Right lobe of liver (tissue), 6 donors: ENCODE measurements at regions of chr11 and their contacts with region 1.

Region 1: DNA sequence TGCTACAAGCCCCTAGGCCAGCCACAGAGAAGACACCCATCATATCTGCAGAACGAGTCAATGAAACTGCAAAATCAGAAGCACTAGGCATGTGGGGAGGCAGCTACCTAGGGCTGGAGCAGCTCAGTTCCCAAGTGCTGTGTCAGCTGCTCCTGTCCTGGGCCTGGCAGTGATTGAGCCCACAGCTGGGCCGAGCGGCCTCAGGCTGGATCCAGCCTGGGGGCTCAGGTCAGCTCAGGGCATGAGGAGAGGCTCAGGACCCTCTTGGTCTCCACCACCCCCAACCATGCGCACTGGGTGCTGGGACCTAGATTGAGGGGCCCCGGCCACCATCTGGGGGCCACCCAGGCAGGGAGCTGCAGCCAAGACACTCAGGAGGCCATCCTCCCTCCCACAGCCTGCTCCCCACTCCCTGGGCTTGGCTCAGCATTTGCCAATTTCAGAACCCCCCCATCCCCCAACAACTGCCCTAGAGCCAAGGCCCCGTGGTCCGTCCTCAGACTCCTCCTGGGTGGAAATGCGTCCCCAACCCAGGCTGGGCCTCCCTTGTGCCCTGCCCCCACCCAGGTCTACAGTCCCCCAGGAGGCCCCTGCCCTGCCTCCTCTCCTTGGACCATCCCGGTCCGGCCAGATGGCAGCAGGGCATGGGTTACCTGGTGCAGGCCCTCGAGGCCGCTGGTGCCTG is 2.4 kb upstream of the TNNT3 start:
- DNase-seq: no peak
- ATAC-seq: peak in 2 of 4 donors; percentile 2 to 4
- H3K4me3 ChIP-seq: no peak overlapping the region
- H3K27ac ChIP-seq: no peak overlapping the region
- H3K4me1 ChIP-seq: no peaks in the 10 kb centered on the region
- H3K27me3 ChIP-seq: no peaks in the 10 kb centered on the region
- CTCF ChIP-seq: no peak
- POLR2A ChIP-seq: no peak

Region 2: DNA sequence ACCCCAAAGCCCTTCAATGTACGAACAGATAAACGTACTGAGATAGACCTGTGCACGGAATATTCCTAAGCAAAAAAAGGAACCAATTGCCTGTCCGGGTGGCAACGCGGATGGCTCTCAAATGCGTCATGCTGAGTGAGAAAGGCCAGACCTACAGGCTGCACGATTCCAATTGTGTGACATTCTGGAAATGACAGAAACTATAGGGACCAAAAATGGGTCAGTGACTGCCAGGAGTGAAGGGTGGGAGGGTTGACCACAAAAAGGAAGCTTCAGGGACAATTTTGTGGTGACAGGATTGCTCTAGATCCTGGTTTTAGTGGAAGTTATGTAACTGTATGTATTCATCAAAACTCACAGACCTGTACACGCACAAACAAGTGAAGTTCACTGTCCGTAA is 106.4 kb before region 1 on chr11:
- intact Hi-C with region 1: no loop called
- DNase-seq: no peak
- ATAC-seq: peak in 1 of 4 donors; percentile 30
- H3K4me3 ChIP-seq: no peak overlapping the region
- H3K27ac ChIP-seq: no peak overlapping the region
- H3K4me1 ChIP-seq: no peaks in the 10 kb centered on the region
- H3K27me3 ChIP-seq: no peaks in the 10 kb centered on the region
- CTCF ChIP-seq: no peak
- POLR2A ChIP-seq: no peak

Region 3: GRCh38 chr11:1896923-1897322 is 20.2 kb before region 1 on chr11:
- intact Hi-C with region 1: loop called (anchors 1 kb)
- DNase-seq: no peak
- ATAC-seq: no peak
- H3K4me3 ChIP-seq: no peak overlapping the region
- H3K27ac ChIP-seq: no peak overlapping the region
- H3K4me1 ChIP-seq: peaks cover 0 to 8% (median 0%) of the 10 kb centered on the region in 4 donors
- H3K27me3 ChIP-seq: no peaks in the 10 kb centered on the region
- CTCF ChIP-seq: no peak
- POLR2A ChIP-seq: no peak